ENCODE measurements at regions of chr4 and their contacts with region 1.

Region 1: GRCh38 chr4:53365486-53366300 is at the start of gene SCFD2:
- DNase-seq: peak; percentile 96 to 99 (median 99)

Region 2: GRCh38 chr4:53377319-53378170 is 11.9 kb after region 1 on chr4 and contains the start of gene FIP1L1:
- intact Hi-C with region 1: loop called (anchors 2 kb)
- DNase-seq: peak; percentile 80 to 96 (median 92)

Region 3: GRCh38 chr4:53497487-53498244 is 132.0 kb after region 1 on chr4:
- intact Hi-C with region 1: no loop called
- DNase-seq: no peak

Region 4: GRCh38 chr4:53520116-53520515 is 154.4 kb after region 1 on chr4:
- intact Hi-C with region 1: no loop called
- DNase-seq: no peak

Measured in head of caudate nucleus (tissue), 42 donors.